ENCODE measurements at regions of chrX and their contacts with region 1.

Region 1: DNA sequence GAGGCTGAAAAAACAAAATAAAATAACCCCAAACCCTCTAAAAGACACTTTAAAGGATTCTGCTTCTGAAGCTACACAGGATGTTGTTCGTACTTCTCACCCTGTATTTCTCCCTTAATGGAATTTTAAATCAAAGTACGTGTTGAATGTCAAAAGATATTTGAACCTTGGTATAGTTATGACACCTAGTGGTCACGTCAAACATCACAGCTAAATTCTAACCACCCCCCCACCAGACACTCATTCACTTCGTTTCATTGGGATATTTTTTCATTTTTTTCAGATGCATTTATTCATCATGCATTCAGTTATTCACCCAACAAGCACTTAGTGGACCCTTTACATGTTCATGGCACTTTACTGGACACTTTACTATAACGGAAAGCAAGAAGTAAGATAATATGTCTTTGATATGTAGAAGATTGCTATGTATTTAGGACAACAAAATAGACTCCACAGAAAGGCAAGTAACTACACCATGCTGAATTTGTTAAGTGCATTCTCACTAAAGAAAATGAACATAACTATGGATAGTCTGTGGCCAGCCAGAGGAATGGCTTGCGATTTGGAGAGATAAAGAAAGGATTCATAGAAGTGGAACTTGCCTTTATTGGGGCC is 62.5 kb upstream of the GPR174 start:
- DNase-seq: peak; percentile 38
- H3K4me3 Mint-ChIP-seq: no peak overlapping the region
- H3K27ac Mint-ChIP-seq: no peak overlapping the region
- H3K4me1 Mint-ChIP-seq: no peaks in the 10 kb centered on the region
- H3K27me3 Mint-ChIP-seq: no peaks in the 10 kb centered on the region
- CTCF ChIP-seq: peak; percentile 53

Region 2: GRCh38 chrX:78119521-78120227 is 962.3 kb before region 1 on chrX:
- CTCF ChIA-PET with region 1: no interaction called
- POLR2A ChIA-PET with region 1: no interaction called
- intact Hi-C with region 1: loop called (anchors 5 kb)
- DNase-seq: peak; percentile 24
- H3K4me3 Mint-ChIP-seq: no peak overlapping the region
- H3K27ac Mint-ChIP-seq: no peak overlapping the region
- H3K4me1 Mint-ChIP-seq: no peaks in the 10 kb centered on the region
- H3K27me3 Mint-ChIP-seq: no peaks in the 10 kb centered on the region
- CTCF ChIP-seq: peak; percentile 33

Region 3: GRCh38 chrX:78555401-78555980 is 526.5 kb before region 1 on chrX:
- CTCF ChIA-PET with region 1: interaction called, 15 read pairs
- POLR2A ChIA-PET with region 1: interaction called, 6 read pairs
- intact Hi-C with region 1: loop called (anchors 1 kb)
- DNase-seq: peak; percentile 1
- H3K4me3 Mint-ChIP-seq: no peak overlapping the region
- H3K27ac Mint-ChIP-seq: no peak overlapping the region
- H3K4me1 Mint-ChIP-seq: no peaks in the 10 kb centered on the region
- H3K27me3 Mint-ChIP-seq: no peaks in the 10 kb centered on the region
- CTCF ChIP-seq: peak; percentile 44

Region 4: GRCh38 chrX:78708262-78708661 is 373.7 kb before region 1 on chrX:
- CTCF ChIA-PET with region 1: no interaction called
- POLR2A ChIA-PET with region 1: no interaction called
- intact Hi-C with region 1: loop called (anchors 5 kb)
- DNase-seq: peak; percentile 24
- H3K4me3 Mint-ChIP-seq: no peak overlapping the region
- H3K27ac Mint-ChIP-seq: no peak overlapping the region
- H3K4me1 Mint-ChIP-seq: no peaks in the 10 kb centered on the region
- H3K27me3 Mint-ChIP-seq: no peaks in the 10 kb centered on the region
- CTCF ChIP-seq: peak; percentile 19

Region 5: GRCh38 chrX:79243691-79244090 is 161.7 kb after region 1 on chrX:
- CTCF ChIA-PET with region 1: no interaction called
- POLR2A ChIA-PET with region 1: no interaction called
- intact Hi-C with region 1: no loop called
- DNase-seq: no peak
- H3K4me3 Mint-ChIP-seq: no peak overlapping the region
- H3K27ac Mint-ChIP-seq: no peak overlapping the region
- H3K4me1 Mint-ChIP-seq: peaks cover 4% of the 10 kb centered on the region
- H3K27me3 Mint-ChIP-seq: no peaks in the 10 kb centered on the region
- CTCF ChIP-seq: no peak

Region 6: GRCh38 chrX:79270401-79270800 is 188.4 kb after region 1 on chrX:
- CTCF ChIA-PET with region 1: interaction called, 5 read pairs
- POLR2A ChIA-PET with region 1: no interaction called
- intact Hi-C with region 1: loop called (anchors 5 kb)
- DNase-seq: peak; percentile 41
- H3K4me3 Mint-ChIP-seq: no peak overlapping the region
- H3K27ac Mint-ChIP-seq: no peak overlapping the region
- H3K4me1 Mint-ChIP-seq: no peaks in the 10 kb centered on the region
- H3K27me3 Mint-ChIP-seq: no peaks in the 10 kb centered on the region
- CTCF ChIP-seq: peak; percentile 24

Region 7: GRCh38 chrX:79412972-79413371 is 331.0 kb after region 1 on chrX:
- CTCF ChIA-PET with region 1: interaction called, 3 read pairs
- POLR2A ChIA-PET with region 1: no interaction called
- intact Hi-C with region 1: loop called (anchors 1 kb)
- DNase-seq: peak; percentile 31
- H3K4me3 Mint-ChIP-seq: peak overlapping the region; percentile 64
- H3K27ac Mint-ChIP-seq: no peak overlapping the region
- H3K4me1 Mint-ChIP-seq: peaks cover 7% of the 10 kb centered on the region
- H3K27me3 Mint-ChIP-seq: peaks cover 2% of the 10 kb centered on the region
- CTCF ChIP-seq: peak; percentile 36

Measured in MCF 10A (cell line).